Activated CD4-positive, alpha-beta T cell treated with anti-CD3 and anti-CD28 coated beads for 36 hours (primary cell): ENCODE measurements at regions of chr11 and their contacts with region 1.

Region 1: GRCh38 chr11:124758317-124759203 is 3.5 kb downstream of the ESAM start:
- DNase-seq: peak; percentile 88
- ATAC-seq: peak; percentile 83
- H3K4me3 Mint-ChIP-seq: peak overlapping the region; percentile 57
- H3K27ac Mint-ChIP-seq: no peak overlapping the region
- H3K4me1 Mint-ChIP-seq: peaks cover 21% of the 10 kb centered on the region
- H3K27me3 Mint-ChIP-seq: peaks cover 46% of the 10 kb centered on the region

Region 2: DNA sequence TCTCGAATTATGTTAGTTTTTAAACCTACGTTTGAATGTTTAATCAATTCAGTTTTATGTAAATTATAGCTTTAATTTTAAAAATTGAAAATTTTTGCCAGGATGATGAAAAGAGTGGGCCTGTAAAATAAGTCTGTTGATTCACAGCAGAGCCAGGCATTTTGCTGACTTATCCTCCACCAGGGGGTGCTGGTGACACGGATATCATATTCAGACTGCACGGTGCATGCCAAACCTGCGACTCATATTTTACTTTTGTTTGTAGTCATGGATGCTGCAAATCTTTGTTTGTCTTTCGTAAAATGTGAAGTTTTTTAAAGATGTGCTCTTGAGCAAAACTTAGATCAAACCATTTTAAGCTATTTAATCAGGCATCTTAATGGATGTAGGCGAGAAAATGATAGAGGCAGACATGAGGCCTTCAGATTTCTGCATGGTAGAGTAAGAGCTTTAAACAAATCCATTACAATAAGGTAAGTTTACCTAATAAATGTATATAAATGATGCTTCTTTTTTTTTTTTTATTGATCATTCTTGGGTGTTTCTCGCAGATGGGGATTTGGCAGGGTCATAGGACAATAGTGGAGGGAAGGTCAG is 356.1 kb before region 1 on chr11:
- CTCF ChIA-PET with region 1: no interaction called
- POLR2A ChIA-PET with region 1: no interaction called
- intact Hi-C with region 1: no loop called
- DNase-seq: peak; percentile 82
- ATAC-seq: peak; percentile 93
- H3K4me3 Mint-ChIP-seq: no peak overlapping the region
- H3K27ac Mint-ChIP-seq: no peak overlapping the region
- H3K4me1 Mint-ChIP-seq: peaks cover 2% of the 10 kb centered on the region
- H3K27me3 Mint-ChIP-seq: peaks cover 4% of the 10 kb centered on the region

Region 3: GRCh38 chr11:124415356-124415923 is 343.1 kb before region 1 on chr11:
- CTCF ChIA-PET with region 1: no interaction called
- POLR2A ChIA-PET with region 1: no interaction called
- intact Hi-C with region 1: loop called in 1 of 2 experiments (anchors 2 kb)
- DNase-seq: no peak
- ATAC-seq: no peak
- H3K4me3 Mint-ChIP-seq: no peak overlapping the region
- H3K27ac Mint-ChIP-seq: no peak overlapping the region
- H3K4me1 Mint-ChIP-seq: no peaks in the 10 kb centered on the region
- H3K27me3 Mint-ChIP-seq: peaks cover 8% of the 10 kb centered on the region

Region 4: DNA sequence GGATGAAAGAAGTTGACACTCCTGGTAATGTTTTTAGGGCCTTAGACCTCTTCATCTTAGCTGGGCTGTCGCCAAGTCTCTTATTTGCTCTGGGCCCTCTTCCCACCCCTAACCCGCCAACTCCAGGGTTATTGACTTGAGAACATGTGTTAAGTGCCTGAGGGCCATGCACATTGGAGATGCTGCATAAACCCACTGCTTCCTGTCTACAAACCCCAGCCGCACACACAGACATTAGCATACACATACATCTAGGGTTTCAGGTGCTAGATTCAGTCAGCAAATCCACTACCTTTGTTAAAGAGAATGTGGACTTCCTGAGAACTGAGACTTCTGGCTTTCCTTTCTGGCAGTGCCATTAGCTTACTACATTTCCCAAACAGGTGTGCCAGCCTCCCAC is 146.5 kb before region 1 on chr11:
- CTCF ChIA-PET with region 1: no interaction called
- POLR2A ChIA-PET with region 1: no interaction called
- intact Hi-C with region 1: no loop called
- DNase-seq: peak; percentile 45
- ATAC-seq: peak; percentile 78
- H3K4me3 Mint-ChIP-seq: no peak overlapping the region
- H3K27ac Mint-ChIP-seq: peak overlapping the region; percentile 10
- H3K4me1 Mint-ChIP-seq: peaks cover 13% of the 10 kb centered on the region
- H3K27me3 Mint-ChIP-seq: peaks cover 3% of the 10 kb centered on the region

Region 5: GRCh38 chr11:124644426-124645280 is 113.9 kb before region 1 on chr11:
- CTCF ChIA-PET with region 1: interaction called, 3 read pairs
- POLR2A ChIA-PET with region 1: no interaction called
- intact Hi-C with region 1: loop called in 1 of 2 experiments (anchors 1 kb)
- DNase-seq: peak; percentile 38
- ATAC-seq: no peak
- H3K4me3 Mint-ChIP-seq: no peak overlapping the region
- H3K27ac Mint-ChIP-seq: no peak overlapping the region
- H3K4me1 Mint-ChIP-seq: peaks cover 3% of the 10 kb centered on the region
- H3K27me3 Mint-ChIP-seq: no peaks in the 10 kb centered on the region

Region 6: GRCh38 chr11:124746621-124747243 is 11.8 kb before region 1 on chr11:
- CTCF ChIA-PET with region 1: interaction called, 79 read pairs
- POLR2A ChIA-PET with region 1: interaction called, 3 read pairs
- intact Hi-C with region 1: loop called (anchors 1 to 2 kb)
- DNase-seq: peak; percentile 88
- ATAC-seq: peak; percentile 92
- H3K4me3 Mint-ChIP-seq: peak overlapping the region; percentile 81
- H3K27ac Mint-ChIP-seq: peak overlapping the region; percentile 90
- H3K4me1 Mint-ChIP-seq: peaks cover 11% of the 10 kb centered on the region
- H3K27me3 Mint-ChIP-seq: peaks cover 2% of the 10 kb centered on the region

Region 7: GRCh38 chr11:124793466-124794278 is 35.1 kb after region 1 on chr11:
- CTCF ChIA-PET with region 1: interaction called, 25 read pairs
- POLR2A ChIA-PET with region 1: no interaction called
- intact Hi-C with region 1: loop called in 1 of 2 experiments (anchors 1 kb)
- DNase-seq: peak; percentile 38
- ATAC-seq: peak; percentile 72
- H3K4me3 Mint-ChIP-seq: no peak overlapping the region
- H3K27ac Mint-ChIP-seq: no peak overlapping the region
- H3K4me1 Mint-ChIP-seq: peaks cover 47% of the 10 kb centered on the region
- H3K27me3 Mint-ChIP-seq: no peaks in the 10 kb centered on the region

Region 8: GRCh38 chr11:124837491-124837856 is 78.9 kb after region 1 on chr11:
- CTCF ChIA-PET with region 1: interaction called, 10 read pairs
- POLR2A ChIA-PET with region 1: no interaction called
- intact Hi-C with region 1: loop called (anchors 1 to 2 kb)
- DNase-seq: no peak
- ATAC-seq: peak; percentile 50
- H3K4me3 Mint-ChIP-seq: no peak overlapping the region
- H3K27ac Mint-ChIP-seq: no peak overlapping the region
- H3K4me1 Mint-ChIP-seq: peaks cover 15% of the 10 kb centered on the region
- H3K27me3 Mint-ChIP-seq: peaks cover 57% of the 10 kb centered on the region

Region 9: DNA sequence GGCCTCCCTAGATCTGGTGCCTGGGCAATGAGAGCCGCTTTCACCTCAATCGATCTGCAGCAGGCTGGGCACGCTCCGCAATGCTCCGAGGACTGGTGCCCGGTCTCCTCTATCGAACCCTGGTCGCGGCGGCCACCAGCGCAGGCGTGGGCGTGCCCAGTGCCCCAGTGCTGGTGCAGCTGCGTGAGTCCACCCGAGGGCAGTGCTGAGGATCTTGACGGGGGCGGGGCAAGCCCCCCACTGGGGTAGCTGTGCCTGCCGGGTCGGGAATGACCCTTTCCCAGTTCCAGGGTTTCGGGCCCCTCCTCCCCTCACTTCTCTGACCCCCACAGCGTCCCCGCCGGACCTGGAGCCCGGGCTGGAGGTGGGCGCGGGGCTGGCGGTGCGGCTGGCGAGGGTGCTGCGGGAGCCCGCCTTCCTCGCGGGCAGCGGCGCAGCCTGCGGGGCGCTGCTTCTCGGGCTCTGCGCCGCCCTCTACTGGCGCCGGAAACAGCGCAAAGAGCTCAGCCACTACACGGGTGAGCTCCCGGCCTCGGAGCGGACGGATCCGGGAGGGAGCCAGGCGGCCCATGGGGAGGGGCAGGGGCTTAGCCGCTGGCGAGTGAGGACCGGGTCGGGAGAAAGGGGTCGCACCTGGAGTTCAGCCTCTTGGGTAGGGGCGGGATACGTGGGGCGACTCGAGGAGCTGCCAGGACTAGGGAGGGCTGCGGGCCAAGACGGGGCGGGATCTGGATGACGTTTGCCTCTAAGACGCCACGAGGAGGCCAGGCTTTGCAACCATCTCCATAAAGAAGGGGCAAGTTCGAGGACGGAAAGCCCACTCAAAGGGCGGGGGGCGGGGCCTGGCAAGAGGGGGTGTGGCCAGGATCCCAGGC is 117.6 kb after region 1 on chr11:
- CTCF ChIA-PET with region 1: interaction called, 4 read pairs
- POLR2A ChIA-PET with region 1: no interaction called
- intact Hi-C with region 1: loop called in 1 of 2 experiments (anchors 1 kb)
- DNase-seq: peak; percentile 88
- ATAC-seq: peak; percentile 98
- H3K4me3 Mint-ChIP-seq: peak overlapping the region; percentile 77
- H3K27ac Mint-ChIP-seq: peak overlapping the region; percentile 58
- H3K4me1 Mint-ChIP-seq: peaks cover 16% of the 10 kb centered on the region
- H3K27me3 Mint-ChIP-seq: peaks cover 27% of the 10 kb centered on the region